ENCODE measurements at regions of chr15 and their contacts with region 1.

Region 1: GRCh38 chr15:100849252-100850171 is 30.1 kb upstream of the ALDH1A3 start:
- DNase-seq: peak; percentile 75 to 88
- H3K4me3 ChIP-seq: peak overlapping the region; percentile 96
- H3K27ac ChIP-seq: peak overlapping the region; percentile 99
- H3K4me1 ChIP-seq: peaks cover 45% of the 10 kb centered on the region
- H3K27me3 ChIP-seq: no peaks in the 10 kb centered on the region
- CTCF ChIP-seq: peak; percentile 56; the same call in 1 of the 2 replicates

Region 2: GRCh38 chr15:100060276-100061255 is 788.9 kb before region 1 on chr15:
- CTCF ChIA-PET with region 1: no interaction called
- POLR2A ChIA-PET with region 1: interaction called, 11 read pairs
- intact Hi-C with region 1: no loop called
- DNase-seq: peak in 1 of 2 experiments; percentile 50
- H3K4me3 ChIP-seq: no peak overlapping the region
- H3K27ac ChIP-seq: no peak overlapping the region
- H3K4me1 ChIP-seq: no peaks in the 10 kb centered on the region
- H3K27me3 ChIP-seq: peaks cover 20% of the 10 kb centered on the region
- CTCF ChIP-seq: no peak

Region 3: DNA sequence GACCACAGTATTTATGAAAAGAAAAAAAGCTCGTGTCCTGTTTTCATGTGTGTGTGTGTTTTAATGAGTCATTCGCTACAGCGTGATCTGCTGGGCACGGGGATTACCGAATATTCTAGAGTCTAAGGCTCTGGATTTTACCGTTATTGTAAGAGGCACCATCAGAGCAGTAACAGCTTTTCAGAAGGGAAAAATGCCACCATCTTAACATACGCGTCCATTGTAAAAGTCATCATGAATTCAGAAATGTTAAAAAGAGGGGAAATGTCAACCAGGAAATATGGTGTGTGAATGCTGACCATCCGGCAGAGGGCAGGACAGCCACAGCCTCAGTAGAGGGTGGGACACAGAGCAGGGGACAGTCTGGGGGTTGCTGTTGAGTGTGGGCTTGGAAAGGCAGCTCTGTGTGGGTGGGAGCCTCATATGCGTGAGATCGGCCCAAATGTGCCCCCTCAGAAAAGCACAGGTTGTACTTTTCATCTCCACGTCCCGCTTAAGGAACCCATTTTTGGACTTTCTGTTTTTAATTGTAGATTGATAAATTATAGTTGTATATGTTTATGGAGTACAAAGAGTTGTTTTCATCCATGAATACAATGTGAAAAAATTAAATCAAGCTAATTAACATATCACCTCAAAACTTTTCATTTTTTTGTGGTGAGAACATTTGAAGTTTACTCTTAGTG is 177.5 kb before region 1 on chr15:
- CTCF ChIA-PET with region 1: no interaction called
- POLR2A ChIA-PET with region 1: no interaction called
- intact Hi-C with region 1: loop called (anchors 1 kb)
- DNase-seq: peak in 1 of 2 experiments; percentile 56
- H3K4me3 ChIP-seq: no peak overlapping the region
- H3K27ac ChIP-seq: peak overlapping the region; percentile 27; the same call in 1 of the 2 replicates
- H3K4me1 ChIP-seq: 0 out of 2 replicates have a peak, but pooled peaks cover 7% of the 10 kb centered on the region
- H3K27me3 ChIP-seq: no peaks in the 10 kb centered on the region
- CTCF ChIP-seq: peak; percentile 68

Region 4: DNA sequence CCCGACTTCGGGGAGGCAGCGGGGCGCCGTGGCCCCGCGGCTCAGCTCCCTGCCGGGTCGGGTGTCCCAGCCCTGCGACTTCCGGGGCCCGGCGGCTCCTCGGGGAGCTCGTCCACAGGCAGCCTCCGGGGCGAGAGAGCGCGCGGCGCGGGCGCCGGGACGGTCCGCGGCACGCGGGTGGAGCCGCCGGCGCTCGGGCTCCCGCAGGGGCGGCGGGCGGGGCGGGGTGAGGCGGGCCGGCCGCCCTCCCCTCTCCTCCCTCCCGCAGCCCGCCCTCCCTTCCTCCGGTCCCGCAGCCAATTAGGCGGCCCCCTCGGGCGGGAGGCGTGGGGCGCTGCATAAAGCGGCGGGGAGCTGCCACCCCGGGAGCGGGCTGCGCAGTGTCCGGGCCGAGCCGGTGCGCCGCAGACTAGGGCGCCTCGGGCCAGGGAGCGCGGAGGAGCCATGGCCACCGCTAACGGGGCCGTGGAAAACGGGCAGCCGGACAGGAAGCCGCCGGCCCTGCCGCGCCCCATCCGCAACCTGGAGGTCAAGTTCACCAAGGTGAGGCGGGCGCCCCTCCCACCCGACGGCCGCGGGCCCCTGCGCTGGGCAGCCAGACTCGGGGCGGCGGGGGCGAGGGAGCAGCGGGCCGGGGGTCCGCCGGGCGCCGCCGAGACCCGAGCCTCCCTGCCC is 30.1 kb after region 1 on chr15 and contains the start of gene ALDH1A3:
- CTCF ChIA-PET with region 1: no interaction called
- POLR2A ChIA-PET with region 1: interaction called, 4 read pairs
- intact Hi-C with region 1: loop called (anchors 1 kb)
- DNase-seq: peak; percentile 70 to 90
- H3K4me3 ChIP-seq: peak within 1 kb of the TSS; percentile 94
- H3K27ac ChIP-seq: peak within 1 kb of the TSS; percentile 75
- H3K4me1 ChIP-seq: peaks cover 29% of the 10 kb centered on the region
- H3K27me3 ChIP-seq: no peaks in the 10 kb centered on the region
- CTCF ChIP-seq: no peak
- total RNA-seq, gene ALDH1A3: 462 and 469 TPM in 2 replicates

Region 5: DNA sequence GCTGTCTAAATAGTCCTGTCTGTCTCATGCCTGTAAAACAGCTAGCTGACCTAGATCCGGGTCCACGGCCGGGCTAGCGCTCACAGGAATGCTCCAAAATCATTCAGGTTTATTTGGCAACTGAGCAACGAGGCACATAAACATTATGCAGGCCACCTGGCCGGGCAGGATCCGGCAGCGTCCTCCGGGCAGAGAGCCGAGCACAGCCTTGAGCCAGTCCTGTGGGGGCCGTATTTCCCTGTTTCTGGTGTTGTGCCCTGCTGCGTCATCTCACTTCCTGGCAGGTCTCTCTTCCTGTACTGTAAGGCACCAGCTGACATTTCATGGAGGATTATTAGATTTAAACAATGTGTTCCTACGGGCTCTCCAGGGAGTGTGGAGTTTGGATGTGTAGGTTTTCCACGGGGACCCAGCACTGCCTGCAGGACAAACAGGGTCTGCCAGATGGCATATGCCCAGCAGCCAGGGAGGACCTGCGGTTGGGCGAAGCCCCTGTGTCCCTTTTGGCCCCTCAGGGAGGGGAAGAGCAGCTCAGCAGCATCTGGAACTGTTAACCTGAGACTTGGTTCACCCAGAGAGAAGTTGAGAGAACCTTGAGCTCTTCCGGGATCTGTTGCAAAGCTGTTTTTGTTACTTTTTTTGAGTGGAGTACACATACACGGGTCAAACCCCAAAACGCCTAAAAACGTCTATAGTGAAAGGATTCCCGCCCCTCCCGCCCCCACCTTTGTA is 53.1 kb after region 1 on chr15:
- CTCF ChIA-PET with region 1: no interaction called
- POLR2A ChIA-PET with region 1: no interaction called
- intact Hi-C with region 1: no loop called
- DNase-seq: no peak
- H3K4me3 ChIP-seq: no peak overlapping the region
- H3K27ac ChIP-seq: no peak overlapping the region
- H3K4me1 ChIP-seq: no peaks in the 10 kb centered on the region
- H3K27me3 ChIP-seq: no peaks in the 10 kb centered on the region
- CTCF ChIP-seq: no peak

Region 6: DNA sequence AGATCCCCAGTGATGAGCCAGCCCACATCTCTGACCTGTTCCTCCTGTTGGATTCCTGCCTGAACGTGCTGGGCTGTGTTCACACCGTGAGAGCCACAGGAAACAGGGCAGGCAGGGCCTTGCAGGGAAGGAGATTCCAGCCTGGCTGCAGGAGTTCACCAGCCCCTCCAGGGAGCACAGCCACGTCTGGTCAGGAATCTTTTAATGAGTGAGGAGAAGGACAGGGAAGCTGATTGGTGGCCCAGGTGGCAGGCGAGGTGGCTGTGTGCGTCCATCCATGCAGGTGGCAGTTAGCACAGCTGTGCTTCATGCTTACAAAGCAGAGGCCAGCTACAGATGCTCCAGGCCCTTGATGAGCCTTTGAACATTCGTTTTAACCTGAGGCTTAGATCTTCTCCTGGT is 80.1 kb after region 1 on chr15:
- CTCF ChIA-PET with region 1: no interaction called
- POLR2A ChIA-PET with region 1: no interaction called
- intact Hi-C with region 1: no loop called
- DNase-seq: no peak
- H3K4me3 ChIP-seq: no peak overlapping the region
- H3K27ac ChIP-seq: no peak overlapping the region
- H3K4me1 ChIP-seq: 0 out of 2 replicates have a peak, but pooled peaks cover 13% of the 10 kb centered on the region
- H3K27me3 ChIP-seq: no peaks in the 10 kb centered on the region
- CTCF ChIP-seq: no peak